Thyroid gland (tissue), 4 donors: ENCODE measurements at regions of chr3 and their contacts with region 1.

Region 1: DNA sequence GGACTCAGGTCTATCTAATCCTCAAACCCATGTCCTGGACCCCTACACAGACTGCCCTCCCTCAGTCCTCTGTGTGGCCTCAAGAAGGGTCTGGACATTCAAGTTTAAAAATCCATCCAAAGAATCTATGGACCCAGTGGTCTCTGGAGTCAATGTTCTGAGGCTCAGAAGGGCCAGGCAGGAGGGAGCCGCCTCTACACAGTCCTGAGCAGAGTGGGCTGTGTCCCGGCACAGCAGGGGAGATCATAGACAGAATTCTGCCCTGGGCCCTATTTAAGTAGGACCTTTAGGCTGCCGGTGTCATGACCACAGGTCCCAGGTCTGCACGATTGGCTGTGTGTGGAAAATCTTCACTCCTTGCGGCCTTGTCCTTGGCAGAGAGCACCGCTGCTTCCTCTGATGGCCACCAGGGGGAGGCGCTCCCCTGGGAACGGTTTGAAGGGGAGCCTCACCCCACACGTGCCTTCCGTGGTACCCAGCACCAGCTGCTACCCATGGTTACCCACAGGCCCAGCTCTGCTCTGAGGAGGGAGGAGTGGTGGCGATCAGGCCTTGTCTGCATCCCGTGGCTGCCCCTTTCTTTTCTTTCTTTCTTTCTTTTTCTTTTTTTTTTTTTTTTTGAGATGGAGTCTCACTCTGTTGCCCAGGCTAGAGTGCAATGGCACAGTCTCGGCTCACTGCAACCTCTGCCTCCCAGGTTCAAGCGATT is 37.9 kb downstream of the CHRD start:
- DNase-seq: peak; percentile 58 to 68
- H3K4me3 ChIP-seq: no peak overlapping the region
- H3K27ac ChIP-seq: no peak overlapping the region
- H3K4me1 ChIP-seq: no peaks in the 10 kb centered on the region
- H3K27me3 ChIP-seq: no peaks in the 10 kb centered on the region
- CTCF ChIP-seq: peak in 5 of 6 experiments; percentile 60 to 78 (median 74)
- POLR2A ChIP-seq: no peak

Region 2: GRCh38 chr3:184543843-184544512 is 126.2 kb after region 1 on chr3:
- intact Hi-C with region 1: loop called (anchors 5 kb)
- DNase-seq: peak; percentile 71 to 72
- H3K4me3 ChIP-seq: no peak overlapping the region
- H3K27ac ChIP-seq: no peak overlapping the region
- H3K4me1 ChIP-seq: peaks cover 0 to 5% of the 10 kb centered on the region in 2 donors
- H3K27me3 ChIP-seq: no peaks in the 10 kb centered on the region
- CTCF ChIP-seq: peak; percentile 79 to 94 (median 82)
- POLR2A ChIP-seq: no peak